ENCODE measurements at regions of chr12 and their contacts with region 1.

Region 1: GRCh38 chr12:108803428-108804105 is 53.8 kb downstream of the SSH1 start:
- DNase-seq: peak; percentile 85 to 92
- ATAC-seq: peak; percentile 82 to 86
- H3K4me3 ChIP-seq: no peak overlapping the region
- H3K27ac ChIP-seq: peak overlapping the region; percentile 31 to 68; a peak in 4 of 6 replicates
- H3K4me1 ChIP-seq: peaks cover 6% of the 10 kb centered on the region
- CTCF ChIP-seq: peak; percentile 94
- EP300 ChIP-seq: no peak
- POLR2A ChIP-seq: no peak
- RAD21 ChIP-seq: peak; percentile 94 to 98

Region 2: DNA sequence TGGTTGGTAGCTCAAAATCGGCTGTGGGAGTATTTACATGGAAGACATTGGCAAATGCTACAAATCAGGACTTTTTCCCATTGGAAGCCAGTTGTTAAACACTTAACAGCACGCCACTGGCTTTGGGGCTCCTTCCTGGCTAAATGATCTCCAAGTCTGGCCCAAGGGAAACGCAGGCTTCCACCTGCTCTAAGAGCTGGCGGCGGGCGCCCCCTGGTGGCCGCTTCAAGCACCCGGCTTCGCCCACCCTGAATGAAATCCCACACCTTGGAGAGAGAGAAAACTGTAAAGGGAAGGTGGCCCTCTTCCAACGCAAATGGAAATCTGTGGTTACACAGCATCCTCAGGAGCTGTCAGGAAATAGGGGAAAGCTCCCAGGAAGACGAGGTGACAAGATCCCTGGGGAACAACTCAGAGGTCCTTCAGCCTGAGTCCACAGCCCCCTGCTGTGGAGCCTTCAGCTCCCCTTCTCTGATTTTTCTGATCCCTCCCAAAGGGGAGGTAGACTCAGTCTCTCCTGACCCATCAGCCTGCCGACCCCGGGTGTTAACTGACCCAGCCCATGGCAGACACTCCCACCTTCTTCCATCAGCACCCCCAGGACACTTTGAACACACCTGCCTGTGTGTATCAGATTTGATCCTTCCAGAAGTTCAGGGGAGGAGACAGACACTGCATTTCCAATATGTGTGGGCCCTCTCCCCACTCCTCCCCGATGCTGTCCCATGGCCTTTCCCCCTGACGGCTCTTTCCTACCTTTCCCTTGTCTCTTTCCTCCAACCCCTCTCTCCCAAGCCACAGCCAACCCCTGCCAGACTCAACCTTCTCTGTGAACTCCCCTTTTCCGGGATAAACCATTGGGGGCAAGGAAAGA is 185.3 kb before region 1 on chr12:
- CTCF ChIA-PET with region 1: interaction called, 18 read pairs
- POLR2A ChIA-PET with region 1: no interaction called
- DNase-seq: peak; percentile 86 to 90
- ATAC-seq: peak; percentile 81 to 94
- H3K4me3 ChIP-seq: no peak overlapping the region
- H3K27ac ChIP-seq: peak overlapping the region in 1 of 2 experiments; percentile 17; a peak in 2 of 6 replicates
- H3K4me1 ChIP-seq: peaks cover 7% of the 10 kb centered on the region
- CTCF ChIP-seq: peak; percentile 96
- EP300 ChIP-seq: no peak
- POLR2A ChIP-seq: no peak
- RAD21 ChIP-seq: peak; percentile 96 to 98

Region 3: GRCh38 chr12:108664338-108665258 is 139.0 kb before region 1 on chr12:
- CTCF ChIA-PET with region 1: interaction called, 313 read pairs
- POLR2A ChIA-PET with region 1: no interaction called
- DNase-seq: peak; percentile 82 to 94
- ATAC-seq: peak; percentile 91 to 93
- H3K4me3 ChIP-seq: no peak overlapping the region
- H3K27ac ChIP-seq: peak overlapping the region; percentile 50 to 78
- H3K4me1 ChIP-seq: peaks cover 59% of the 10 kb centered on the region
- CTCF ChIP-seq: peak; percentile 94
- EP300 ChIP-seq: no peak
- POLR2A ChIP-seq: no peak
- RAD21 ChIP-seq: peak; percentile 98 to 99

Region 4: GRCh38 chr12:108691175-108691997 is 112.2 kb before region 1 on chr12:
- CTCF ChIA-PET with region 1: interaction called, 31 read pairs
- POLR2A ChIA-PET with region 1: no interaction called
- DNase-seq: peak; percentile 93 to 99
- ATAC-seq: peak; percentile 95 to 97
- H3K4me3 ChIP-seq: peak overlapping the region; percentile 37
- H3K27ac ChIP-seq: peak overlapping the region; percentile 91
- H3K4me1 ChIP-seq: peaks cover 71% of the 10 kb centered on the region
- CTCF ChIP-seq: no peak
- EP300 ChIP-seq: peak; percentile 40; a peak in 1 of 5 replicates
- POLR2A ChIP-seq: peak; percentile 13; the same call in 1 of the 2 replicates
- RAD21 ChIP-seq: peak in 1 of 2 experiments; percentile 23; a peak in 1 of 5 replicates

Region 5: DNA sequence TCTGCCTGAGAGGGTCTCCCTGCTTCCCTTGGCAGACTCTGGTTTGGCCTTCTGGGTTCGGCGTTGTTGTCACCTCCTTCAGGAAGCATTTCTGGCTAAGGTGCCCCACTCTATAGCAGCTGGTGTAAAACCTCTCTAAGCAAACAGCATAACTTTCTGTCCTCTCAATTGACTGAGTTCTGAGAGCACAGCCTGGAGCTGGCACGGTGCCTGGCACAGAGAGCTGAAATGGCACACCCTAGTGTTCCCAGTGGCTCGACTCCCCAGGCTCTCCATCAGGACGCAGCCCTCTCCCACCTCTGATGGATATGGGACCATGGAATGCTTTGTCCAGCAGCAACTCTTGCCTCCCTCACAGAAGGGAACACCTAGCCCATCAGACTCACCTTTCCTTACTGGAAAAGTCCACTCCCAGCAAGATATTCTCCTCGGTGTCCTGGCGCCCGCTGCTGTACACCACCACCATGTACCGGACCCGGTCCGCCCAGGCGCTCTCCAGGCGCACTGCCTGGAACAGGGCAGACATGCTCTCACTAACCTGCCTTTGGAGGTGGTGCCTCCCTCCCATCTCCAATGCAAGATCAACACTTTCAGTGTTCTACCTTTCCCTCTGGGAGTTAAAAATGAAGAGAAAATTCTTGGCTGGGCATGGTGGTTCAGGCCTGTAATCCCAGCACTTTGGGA is 13.2 kb after region 1 on chr12:
- CTCF ChIA-PET with region 1: interaction called, 100 read pairs
- POLR2A ChIA-PET with region 1: no interaction called
- DNase-seq: no peak
- ATAC-seq: peak in 1 of 2 experiments; percentile 17; a peak in 1 of 6 replicates
- H3K4me3 ChIP-seq: no peak overlapping the region
- H3K27ac ChIP-seq: peak overlapping the region in 1 of 2 experiments; percentile 32; a peak in 4 of 6 replicates
- H3K4me1 ChIP-seq: peaks cover 11% of the 10 kb centered on the region; the same call in 2 of the 3 replicates
- CTCF ChIP-seq: no peak
- EP300 ChIP-seq: no peak
- POLR2A ChIP-seq: no peak; the same call in 1 of the 2 replicates
- RAD21 ChIP-seq: no peak

Region 6: DNA sequence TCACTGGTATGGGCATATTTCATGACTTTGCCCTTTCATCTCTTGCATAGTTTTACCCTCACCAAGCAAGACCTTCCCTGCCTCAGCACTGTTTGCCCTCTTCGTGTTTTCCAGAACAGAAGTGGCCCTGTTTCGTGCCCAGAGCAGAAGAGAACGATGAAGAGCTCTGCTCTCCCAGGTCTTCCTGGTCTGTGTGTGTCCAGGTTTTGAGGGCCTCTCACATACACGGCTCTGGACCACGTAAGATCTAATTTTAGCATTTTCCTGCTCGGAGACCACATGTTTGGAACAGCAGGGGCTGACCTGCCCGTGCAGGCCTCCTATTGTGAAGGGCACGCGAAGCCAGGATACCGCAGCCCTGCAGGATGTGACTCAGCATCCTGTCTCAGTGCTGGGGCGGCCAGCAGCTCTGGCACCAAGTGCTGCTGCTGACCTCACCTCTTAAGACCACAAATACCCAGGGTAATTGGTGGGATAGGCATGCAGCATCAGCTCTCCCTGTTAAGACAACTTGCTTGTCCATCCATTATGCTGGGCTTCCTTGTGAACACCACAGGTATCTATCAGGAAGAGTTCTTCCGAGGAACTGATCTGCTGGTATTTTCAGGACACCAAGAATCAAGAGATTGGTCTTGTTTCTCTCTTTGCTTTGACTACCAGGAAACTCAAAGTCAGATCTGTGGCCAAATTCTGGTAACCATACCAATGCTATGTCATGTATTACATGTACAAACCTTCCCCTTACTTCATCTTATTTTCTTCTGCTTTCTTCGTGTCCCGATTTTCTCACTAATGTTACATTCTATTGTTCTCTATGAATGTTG is 34.8 kb after region 1 on chr12:
- CTCF ChIA-PET with region 1: interaction called, 16 read pairs
- POLR2A ChIA-PET with region 1: no interaction called
- DNase-seq: peak; percentile 96 to 99
- ATAC-seq: peak; percentile 93 to 96
- H3K4me3 ChIP-seq: no peak overlapping the region
- H3K27ac ChIP-seq: peak overlapping the region; percentile 92 to 94
- H3K4me1 ChIP-seq: peaks cover 67% of the 10 kb centered on the region
- CTCF ChIP-seq: no peak
- EP300 ChIP-seq: peak; percentile 49 to 87; a peak in 3 of 5 replicates
- POLR2A ChIP-seq: no peak
- RAD21 ChIP-seq: peak; percentile 22 to 32; a peak in 1 of 5 replicates